ENCODE measurements at regions of chr6 and their contacts with region 1.

Region 1: GRCh38 chr6:154874773-154875592 is 120.1 kb upstream of the TIAM2 start:
- DNase-seq: no peak
- H3K4me3 ChIP-seq: no peak overlapping the region
- H3K27ac ChIP-seq: no peak overlapping the region
- H3K4me1 ChIP-seq: no peaks in the 10 kb centered on the region
- H3K27me3 ChIP-seq: no peaks in the 10 kb centered on the region
- CTCF ChIP-seq: no peak

Region 2: DNA sequence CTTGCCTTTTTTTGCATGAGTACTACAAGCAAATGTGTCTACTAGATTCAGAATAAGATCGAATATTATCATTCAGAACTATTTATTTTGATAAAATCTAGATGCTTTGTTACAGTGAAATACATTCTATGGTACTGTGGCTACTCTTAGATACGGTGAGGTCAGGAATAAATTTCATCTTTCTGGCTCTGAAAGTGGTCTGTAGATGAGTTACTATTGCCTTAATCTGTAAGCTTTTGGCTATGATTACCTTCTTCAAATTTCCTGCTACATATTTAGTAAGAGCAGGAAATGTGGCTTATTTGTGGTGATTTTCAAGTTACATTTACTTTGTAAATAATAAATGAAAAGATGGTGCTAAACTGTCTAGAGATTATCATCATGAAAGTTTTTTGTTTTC is 91.8 kb before region 1 on chr6:
- CTCF ChIA-PET with region 1: no interaction called
- dilution Hi-C with region 1: no loop called
- in situ Hi-C with region 1: no loop called
- intact Hi-C with region 1: no loop called
- DNase-seq: no peak
- H3K4me3 ChIP-seq: no peak overlapping the region
- H3K27ac ChIP-seq: no peak overlapping the region
- H3K4me1 ChIP-seq: no peaks in the 10 kb centered on the region
- H3K27me3 ChIP-seq: no peaks in the 10 kb centered on the region
- CTCF ChIP-seq: no peak

Region 3: DNA sequence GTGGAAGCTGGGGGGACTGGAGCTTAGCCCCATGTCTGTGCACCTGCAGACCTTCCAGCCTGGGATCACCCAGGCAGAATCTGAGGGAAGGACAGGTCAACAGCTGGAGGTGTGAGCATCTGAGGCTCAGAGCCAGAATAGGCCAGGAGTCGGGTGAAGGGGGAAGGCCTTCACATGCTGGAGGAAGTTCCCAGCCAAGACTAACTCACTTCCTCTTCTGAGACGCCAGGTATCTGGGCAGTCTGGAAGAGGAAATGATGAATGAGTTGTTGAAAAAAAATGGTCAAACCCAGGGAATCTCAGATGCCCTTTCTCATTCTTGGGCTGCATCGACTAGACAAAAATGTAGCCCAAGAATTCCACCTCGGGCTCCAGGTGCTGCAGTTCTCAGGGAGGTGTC is 46.5 kb after region 1 on chr6:
- CTCF ChIA-PET with region 1: no interaction called
- dilution Hi-C with region 1: loop called (anchors 5 kb)
- in situ Hi-C with region 1: no loop called
- intact Hi-C with region 1: no loop called
- DNase-seq: no peak
- H3K4me3 ChIP-seq: no peak overlapping the region
- H3K27ac ChIP-seq: no peak overlapping the region
- H3K4me1 ChIP-seq: no peaks in the 10 kb centered on the region
- H3K27me3 ChIP-seq: no peaks in the 10 kb centered on the region
- CTCF ChIP-seq: no peak